Left ventricle myocardium inferior (tissue), 1 donor: ENCODE measurements at regions of chr14 and their contacts with region 1.

Region 1: DNA sequence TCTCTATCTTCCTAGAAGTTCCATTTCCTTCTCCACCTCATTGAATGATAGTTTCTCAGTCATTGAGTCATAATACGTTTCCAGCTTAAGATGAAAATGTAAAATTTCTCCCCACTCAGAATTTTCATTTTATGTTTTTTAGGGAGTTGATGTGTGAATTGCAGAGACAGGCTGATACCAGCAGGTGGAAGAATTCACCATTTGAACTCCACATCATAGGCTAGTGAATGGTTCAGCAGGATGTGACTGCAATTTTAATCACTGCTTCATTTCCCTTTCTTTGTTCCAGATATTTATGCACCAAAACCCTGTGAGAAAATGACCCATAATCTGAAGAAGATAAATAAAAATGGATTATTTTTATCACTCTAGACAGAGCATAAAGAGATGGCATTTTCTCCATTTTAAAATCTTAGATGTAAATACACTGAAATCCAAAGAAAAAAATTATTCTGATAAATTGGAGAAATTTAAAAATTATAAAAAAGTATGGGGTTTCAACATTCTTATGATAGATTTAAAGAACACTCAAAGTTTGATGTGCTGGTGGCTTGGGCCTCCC is 10.6 kb upstream of the PYGL start:
- DNase-seq: no peak
- H3K4me3 ChIP-seq: no peak overlapping the region
- H3K27ac ChIP-seq: no peak overlapping the region
- H3K4me1 ChIP-seq: peaks cover 11% of the 10 kb centered on the region
- H3K27me3 ChIP-seq: peaks cover 6% of the 10 kb centered on the region
- CTCF ChIP-seq: peak; percentile 70

Region 2: GRCh38 chr14:51094901-51095853 is 140.3 kb after region 1 on chr14 and contains the start of gene TRIM9:
- intact Hi-C with region 1: no loop called
- DNase-seq: peak; percentile 94
- H3K4me3 ChIP-seq: peak within 1 kb of the TSS; percentile 77
- H3K27ac ChIP-seq: peak within 1 kb of the TSS; percentile 75
- H3K4me1 ChIP-seq: peaks cover 28% of the 10 kb centered on the region
- H3K27me3 ChIP-seq: peaks cover 90% of the 10 kb centered on the region
- CTCF ChIP-seq: no peak
- total RNA-seq, gene TRIM9: 0.27 TPM

Region 3: DNA sequence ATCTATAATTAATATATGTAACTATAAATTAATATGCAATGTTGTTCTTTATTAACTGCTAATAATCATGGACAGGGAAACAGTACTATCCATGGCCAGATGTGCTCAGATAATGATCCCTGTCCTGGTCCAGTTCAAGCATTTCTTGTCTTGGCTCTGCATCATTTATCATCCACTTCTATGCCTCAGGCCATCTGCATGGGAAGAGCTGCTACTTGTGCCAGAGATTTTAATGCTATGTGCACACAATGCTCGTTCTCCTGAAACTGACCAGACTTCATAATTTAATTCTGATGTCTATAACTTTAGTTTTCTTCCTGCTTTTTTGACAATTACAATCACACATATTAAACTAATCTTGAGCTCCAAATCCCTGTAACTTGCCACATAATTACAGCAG is 274.0 kb after region 1 on chr14:
- intact Hi-C with region 1: loop called (anchors 5 kb)
- DNase-seq: no peak
- H3K4me3 ChIP-seq: no peak overlapping the region
- H3K27ac ChIP-seq: no peak overlapping the region
- H3K4me1 ChIP-seq: no peaks in the 10 kb centered on the region
- H3K27me3 ChIP-seq: no peaks in the 10 kb centered on the region
- CTCF ChIP-seq: no peak